ENCODE measurements at regions of chr1 and their contacts with region 1.

Region 1: GRCh38 chr1:7884757-7885156 is 31.9 kb upstream of the UTS2 start:
- DNase-seq: no peak
- ATAC-seq: no peak
- H3K4me3 ChIP-seq: no peak overlapping the region
- H3K27ac ChIP-seq: no peak overlapping the region
- H3K4me1 ChIP-seq: no peaks in the 10 kb centered on the region
- H3K27me3 ChIP-seq: peaks cover 4% of the 10 kb centered on the region; the same call in 1 of the 2 replicates
- CTCF ChIP-seq: no peak
- POLR2A ChIP-seq: no peak
- RAD21 ChIP-seq: no peak

Region 2: DNA sequence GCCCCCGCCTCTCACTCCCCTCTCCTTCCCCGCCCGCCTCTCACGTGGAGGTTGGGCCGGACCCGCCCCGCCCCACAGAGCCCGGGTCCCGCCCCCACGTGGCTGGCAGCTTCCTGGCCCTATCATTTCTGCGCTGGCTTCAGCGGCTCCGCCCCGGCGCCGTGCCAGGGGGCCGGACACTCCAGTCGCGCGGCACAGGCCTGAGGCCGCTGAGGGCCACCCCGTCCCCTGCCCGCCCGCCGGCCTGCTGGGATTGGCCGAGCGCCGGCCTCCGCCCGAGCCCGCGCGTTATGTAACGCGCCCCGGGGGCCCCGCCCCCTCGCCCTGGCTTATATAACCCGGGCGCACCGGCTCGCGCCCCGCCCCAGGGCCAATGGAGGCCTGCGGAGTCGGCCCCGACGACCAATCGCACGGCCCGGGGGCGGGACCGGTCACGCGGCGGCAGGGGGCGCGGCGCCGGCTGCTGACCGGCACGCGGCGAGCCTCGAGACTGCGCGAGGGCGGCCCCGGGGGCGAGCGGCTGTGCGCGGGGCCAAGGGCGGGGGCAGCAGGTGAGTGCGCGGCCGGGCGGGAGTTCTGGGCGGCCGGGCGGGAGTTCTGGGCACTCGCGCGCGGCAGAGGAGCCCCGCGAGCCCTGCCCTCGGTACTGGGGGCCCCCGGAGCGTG is 100.8 kb before region 1 on chr1 and contains the start of gene PER3:
- CTCF ChIA-PET with region 1: no interaction called
- POLR2A ChIA-PET with region 1: no interaction called
- dilution Hi-C with region 1: no loop called
- in situ Hi-C with region 1: no loop called
- intact Hi-C with region 1: no loop called
- DNase-seq: peak; percentile 95
- ATAC-seq: peak; percentile 97
- H3K4me3 ChIP-seq: peak within 1 kb of the TSS; percentile 53
- H3K27ac ChIP-seq: peak within 1 kb of the TSS; percentile 27
- H3K4me1 ChIP-seq: 0 out of 2 replicates have a peak, but pooled peaks cover 4% of the 10 kb centered on the region
- H3K27me3 ChIP-seq: no peaks in the 10 kb centered on the region
- CTCF ChIP-seq: no peak
- POLR2A ChIP-seq: no peak
- RAD21 ChIP-seq: no peak
- total RNA-seq, gene PER3: 3.4 and 3.6 TPM in 2 replicates

Region 3: GRCh38 chr1:7847599-7847998 is 37.2 kb before region 1 on chr1:
- CTCF ChIA-PET with region 1: no interaction called
- POLR2A ChIA-PET with region 1: no interaction called
- dilution Hi-C with region 1: no loop called
- in situ Hi-C with region 1: no loop called
- intact Hi-C with region 1: loop called (anchors 5 kb)
- DNase-seq: peak; percentile 93
- ATAC-seq: peak; percentile 52
- H3K4me3 ChIP-seq: no peak overlapping the region
- H3K27ac ChIP-seq: peak overlapping the region; percentile 73; the same call in 1 of the 2 replicates
- H3K4me1 ChIP-seq: peaks cover 9% of the 10 kb centered on the region
- H3K27me3 ChIP-seq: peaks cover 2% of the 10 kb centered on the region; the same call in 1 of the 2 replicates
- CTCF ChIP-seq: no peak
- POLR2A ChIP-seq: no peak
- RAD21 ChIP-seq: no peak

Region 4: GRCh38 chr1:7899741-7900140 is 15.0 kb after region 1 on chr1:
- CTCF ChIA-PET with region 1: no interaction called
- POLR2A ChIA-PET with region 1: no interaction called
- dilution Hi-C with region 1: no loop called
- in situ Hi-C with region 1: no loop called
- intact Hi-C with region 1: no loop called
- DNase-seq: peak; percentile 66
- ATAC-seq: no peak
- H3K4me3 ChIP-seq: no peak overlapping the region
- H3K27ac ChIP-seq: no peak overlapping the region
- H3K4me1 ChIP-seq: no peaks in the 10 kb centered on the region; the same call in 1 of the 2 replicates
- H3K27me3 ChIP-seq: no peaks in the 10 kb centered on the region
- CTCF ChIP-seq: no peak
- POLR2A ChIP-seq: no peak
- RAD21 ChIP-seq: no peak